HepG2 (cell line): ENCODE measurements at regions of chr14 and their contacts with region 1.

Region 1: DNA sequence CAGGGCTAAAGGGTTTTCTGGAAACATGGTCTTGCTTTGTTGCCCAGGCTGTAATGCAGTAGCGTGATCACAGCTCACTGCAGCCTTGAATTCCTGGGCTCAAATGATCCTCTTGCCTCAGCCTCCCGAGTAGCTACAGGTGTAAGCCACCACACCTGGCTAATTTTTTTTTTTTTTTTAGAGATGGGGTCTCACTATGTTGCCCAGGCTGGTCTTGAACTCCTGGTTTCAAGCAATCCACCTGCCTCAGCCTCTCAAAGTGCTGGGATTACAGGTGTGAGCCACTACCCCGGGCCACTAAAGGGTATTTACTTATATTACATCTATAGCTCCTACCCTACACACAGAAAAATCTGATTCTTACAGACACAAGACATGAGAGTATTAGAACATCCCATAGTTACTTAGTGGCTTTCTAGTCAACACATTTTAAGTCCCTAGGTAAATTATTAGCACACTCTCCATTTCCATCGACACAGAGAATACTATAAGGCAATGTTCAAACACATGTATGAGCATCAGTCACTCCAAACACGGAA is 6.2 kb upstream of the DCAF11 start:
- DNase-seq: no peak
- ATAC-seq: no peak
- H3K4me3 ChIP-seq: no peak overlapping the region
- H3K27ac ChIP-seq: no peak overlapping the region
- H3K4me1 ChIP-seq: peaks cover 60% of the 10 kb centered on the region
- H3K27me3 ChIP-seq: no peaks in the 10 kb centered on the region
- CTCF ChIP-seq: no peak
- EP300 ChIP-seq: no peak
- POLR2A ChIP-seq: no peak
- RAD21 ChIP-seq: no peak

Region 2: GRCh38 chr14:24080888-24081738 is 27.3 kb before region 1 on chr14:
- CTCF ChIA-PET with region 1: no interaction called
- POLR2A ChIA-PET with region 1: interaction called, 31 read pairs
- in situ Hi-C with region 1: no loop called
- intact Hi-C with region 1: no loop called
- DNase-seq: peak; percentile 38
- ATAC-seq: peak; percentile 83
- H3K4me3 ChIP-seq: peak overlapping the region; percentile 53 to 77 (median 73)
- H3K27ac ChIP-seq: no peak overlapping the region
- H3K4me1 ChIP-seq: peaks cover 22% of the 10 kb centered on the region
- H3K27me3 ChIP-seq: peaks cover 18 to 81% of the 10 kb centered on the region in 2 experiments
- CTCF ChIP-seq: peak; percentile 2; the same call in 1 of the 2 replicates
- EP300 ChIP-seq: no peak
- POLR2A ChIP-seq: peak in 1 of 2 experiments; percentile 33; a peak in 1 of 4 replicates
- RAD21 ChIP-seq: peak; percentile 55; the same call in 1 of the 2 replicates

Region 3: DNA sequence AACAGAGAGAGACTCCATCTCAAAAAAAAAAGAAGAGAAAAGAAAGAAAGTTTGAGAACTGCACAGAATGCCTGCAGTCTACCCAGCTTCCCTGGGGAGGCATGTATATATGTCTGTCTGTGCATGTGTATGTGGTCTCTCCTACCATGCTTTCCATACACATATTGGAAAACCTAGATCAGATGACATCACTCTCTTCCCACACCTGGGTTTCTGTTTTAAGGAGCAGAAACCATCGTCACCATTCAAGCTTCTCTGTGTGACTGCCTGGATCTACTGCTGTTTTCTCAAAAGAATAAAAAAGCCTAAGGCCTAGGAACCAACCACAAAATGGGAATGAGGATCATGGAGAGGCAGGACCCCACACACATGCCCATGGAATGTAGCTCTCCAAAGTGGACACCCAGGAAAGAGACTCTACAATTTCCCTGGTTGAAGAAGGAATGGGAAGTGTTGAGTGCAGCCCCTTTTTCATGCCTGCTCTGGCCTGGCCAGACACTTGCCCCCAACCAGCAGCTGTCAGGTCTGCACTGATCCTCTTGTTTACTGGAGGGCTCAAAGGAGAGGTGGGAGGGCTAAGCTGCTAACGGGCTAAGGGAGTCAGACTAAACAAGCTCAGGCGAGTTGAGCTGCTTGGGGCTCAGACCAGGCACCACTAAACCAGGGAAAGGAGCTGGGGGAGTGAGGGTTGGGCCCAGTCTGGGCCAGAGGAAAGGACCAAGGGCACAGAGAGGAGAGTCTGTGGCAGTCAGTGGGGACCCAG is 22.0 kb before region 1 on chr14:
- CTCF ChIA-PET with region 1: interaction called, 31 read pairs
- POLR2A ChIA-PET with region 1: interaction called, 627 read pairs
- in situ Hi-C with region 1: no loop called
- intact Hi-C with region 1: loop called (anchors 1 kb)
- DNase-seq: no peak
- ATAC-seq: no peak
- H3K4me3 ChIP-seq: no peak overlapping the region
- H3K27ac ChIP-seq: no peak overlapping the region
- H3K4me1 ChIP-seq: peaks cover 39% of the 10 kb centered on the region
- H3K27me3 ChIP-seq: peaks cover 10 to 45% of the 10 kb centered on the region in 2 experiments
- CTCF ChIP-seq: no peak
- EP300 ChIP-seq: no peak
- POLR2A ChIP-seq: no peak
- RAD21 ChIP-seq: no peak

Region 4: DNA sequence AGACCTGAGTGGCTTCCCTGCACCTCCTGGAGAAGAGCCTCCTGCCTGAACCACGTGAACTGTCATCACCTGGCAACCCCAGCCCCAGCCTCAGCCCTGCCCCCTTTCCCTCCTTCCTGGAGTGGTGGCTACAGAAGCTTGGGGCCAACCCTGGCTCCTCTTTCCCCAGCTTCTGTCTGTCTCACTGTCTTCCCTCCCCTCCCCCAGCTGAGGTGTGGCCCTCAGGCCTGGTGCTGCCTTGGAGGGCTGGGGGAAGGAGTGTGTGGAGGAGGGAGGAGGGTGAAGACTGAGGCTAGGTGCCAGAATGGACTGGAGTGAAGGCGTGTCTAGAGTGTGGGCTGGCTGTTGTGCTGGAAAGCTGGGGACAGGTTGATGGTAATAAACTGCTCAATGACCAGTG is 269.3 kb after region 1 on chr14:
- CTCF ChIA-PET with region 1: no interaction called
- POLR2A ChIA-PET with region 1: no interaction called
- in situ Hi-C with region 1: no loop called
- intact Hi-C with region 1: no loop called
- DNase-seq: no peak
- ATAC-seq: no peak; the same call in 2 of the 3 replicates
- H3K4me3 ChIP-seq: no peak overlapping the region
- H3K27ac ChIP-seq: no peak overlapping the region
- H3K4me1 ChIP-seq: peaks cover 15% of the 10 kb centered on the region
- H3K27me3 ChIP-seq: peaks cover 8 to 51% of the 10 kb centered on the region in 2 experiments; a peak in 4 of 5 replicates
- CTCF ChIP-seq: no peak
- EP300 ChIP-seq: no peak
- POLR2A ChIP-seq: no peak
- RAD21 ChIP-seq: no peak